HEK293 (cell line): ENCODE measurements at regions of chr1 and their contacts with region 1.

Region 1: GRCh38 chr1:54872036-54872331 is 15.0 kb downstream of the DHCR24 start:
- H3K4me3 ChIP-seq: no peak overlapping the region
- H3K27ac ChIP-seq: no peak overlapping the region
- H3K4me1 ChIP-seq: no peaks in the 10 kb centered on the region
- CTCF ChIP-seq: no peak

Region 2: GRCh38 chr1:54791880-54792522 is 80.0 kb before region 1 on chr1:
- CTCF ChIA-PET with region 1: no interaction called
- POLR2A ChIA-PET with region 1: no interaction called
- H3K4me3 ChIP-seq: no peak overlapping the region
- H3K27ac ChIP-seq: no peak overlapping the region
- H3K4me1 ChIP-seq: no peaks in the 10 kb centered on the region
- CTCF ChIP-seq: 0 out of 2 replicates have a peak, but pooled peaks have one; percentile 27

Region 3: DNA sequence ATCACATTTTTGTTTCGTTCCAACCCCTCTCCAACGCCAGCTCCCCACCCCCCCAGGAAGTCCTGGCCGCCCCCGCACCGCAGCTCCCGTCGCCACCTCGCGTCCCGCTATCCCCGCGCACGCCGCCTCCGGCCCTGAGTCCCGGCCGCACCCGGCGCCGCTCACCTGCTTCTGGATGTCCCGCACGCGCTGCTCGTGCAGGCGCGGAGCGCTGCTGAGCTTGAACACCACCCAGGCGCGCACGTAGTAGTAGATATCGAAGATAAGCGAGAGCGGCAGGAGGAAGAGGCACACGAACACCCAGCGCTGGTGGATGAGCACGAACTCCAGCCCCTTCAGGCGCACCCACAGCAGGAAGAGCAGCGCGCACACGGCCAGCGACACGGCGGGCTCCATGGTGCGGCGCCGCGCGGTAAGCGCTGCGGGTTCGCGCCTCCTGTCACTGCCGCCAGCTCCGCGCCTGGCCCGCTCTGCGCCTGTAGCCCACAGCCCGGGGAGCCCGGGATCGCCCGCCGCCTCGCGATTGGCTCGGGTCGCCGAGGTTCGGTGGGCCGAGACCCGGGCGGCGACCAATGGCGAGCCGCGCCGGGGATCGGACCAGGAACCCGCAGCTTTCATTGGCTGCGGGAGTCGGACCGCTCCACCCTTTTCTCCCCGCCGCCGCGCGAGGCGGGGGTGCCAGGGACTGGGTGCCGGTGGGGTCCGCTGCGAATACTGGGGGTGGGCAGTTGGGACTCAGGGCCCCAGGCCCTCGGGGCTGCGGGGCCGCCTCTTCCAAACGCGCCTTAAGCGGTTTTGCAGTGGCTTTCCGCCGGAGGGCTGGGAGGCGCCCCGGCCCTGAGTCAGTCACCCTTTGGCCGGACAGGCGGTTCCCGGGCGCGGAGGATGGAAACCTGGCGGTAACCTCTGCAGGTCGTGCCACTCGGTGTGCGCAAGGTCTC is 15.0 kb after region 1 on chr1 and contains the start of gene DHCR24:
- CTCF ChIA-PET with region 1: interaction called, 4 read pairs
- POLR2A ChIA-PET with region 1: interaction called, 18 read pairs
- H3K4me3 ChIP-seq: peak within 1 kb of the TSS; percentile 89
- H3K27ac ChIP-seq: peak within 1 kb of the TSS; percentile 92
- H3K4me1 ChIP-seq: peaks cover 13% of the 10 kb centered on the region
- CTCF ChIP-seq: peak; percentile 52